ENCODE measurements at regions of chr3 and their contacts with region 1.

Region 1: DNA sequence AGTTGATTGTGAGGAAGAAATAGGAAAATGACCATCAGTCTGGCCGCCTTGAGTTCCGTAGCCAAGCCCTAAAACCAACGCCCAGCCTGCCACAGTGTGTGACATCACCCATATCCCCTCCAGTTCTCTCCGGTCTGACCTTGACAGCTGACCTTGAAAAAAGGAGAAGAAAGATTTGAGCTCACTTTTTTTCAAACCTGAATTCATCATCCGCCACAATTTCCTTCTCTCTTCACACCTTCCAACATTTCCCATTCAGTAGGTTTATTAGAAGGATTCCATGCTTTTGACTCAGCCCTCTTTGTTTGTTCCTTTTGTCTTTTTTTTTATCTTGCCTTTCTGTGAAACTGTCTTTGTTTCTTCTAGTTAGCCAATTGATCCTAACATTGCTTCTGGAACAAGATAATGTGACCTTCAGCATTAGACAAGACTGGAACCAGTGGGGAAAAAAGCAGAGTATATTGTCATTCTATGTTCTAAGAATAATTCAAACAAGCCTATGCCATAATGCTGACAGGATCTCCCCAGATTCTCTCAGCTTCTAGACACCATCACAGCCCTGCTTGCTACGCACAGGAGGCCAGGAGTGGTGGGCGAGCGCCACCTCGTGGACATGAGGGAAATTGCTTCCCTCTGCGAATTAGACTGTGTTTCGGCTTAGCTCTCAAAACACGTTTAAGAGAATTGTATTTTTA is 283.1 kb downstream of the FGF12 start:
- DNase-seq: peak; percentile 4
- ATAC-seq: peak; percentile 95
- H3K4me3 ChIP-seq: no peak overlapping the region
- H3K27ac ChIP-seq: no peak overlapping the region
- H3K4me1 ChIP-seq: no peaks in the 10 kb centered on the region
- H3K27me3 ChIP-seq: no peaks in the 10 kb centered on the region
- CTCF ChIP-seq: peak; percentile 96 to 99 (median 98); a peak in 5 of 6 replicates
- EP300 ChIP-seq: no peak
- POLR2A ChIP-seq: no peak
- RAD21 ChIP-seq: peak; percentile 99

Region 2: GRCh38 chr3:191420771-191421170 is 1023.5 kb before region 1 on chr3:
- CTCF ChIA-PET with region 1: interaction called, 18 read pairs
- POLR2A ChIA-PET with region 1: no interaction called
- RAD21 ChIA-PET with region 1: interaction called, 7 read pairs
- SMC1A ChIA-PET with region 1: interaction called, 11 read pairs
- in situ Hi-C with region 1: loop called (anchors 5 kb)
- intact Hi-C with region 1: loop called (anchors 1 kb)
- DNase-seq: no peak
- ATAC-seq: no peak
- H3K4me3 ChIP-seq: no peak overlapping the region
- H3K27ac ChIP-seq: no peak overlapping the region
- H3K4me1 ChIP-seq: no peaks in the 10 kb centered on the region
- H3K27me3 ChIP-seq: peaks cover 0 to 1% of the 10 kb centered on the region in 2 experiments; a peak in 1 of 4 replicates
- CTCF ChIP-seq: no peak
- EP300 ChIP-seq: no peak
- POLR2A ChIP-seq: no peak
- RAD21 ChIP-seq: no peak

Region 3: DNA sequence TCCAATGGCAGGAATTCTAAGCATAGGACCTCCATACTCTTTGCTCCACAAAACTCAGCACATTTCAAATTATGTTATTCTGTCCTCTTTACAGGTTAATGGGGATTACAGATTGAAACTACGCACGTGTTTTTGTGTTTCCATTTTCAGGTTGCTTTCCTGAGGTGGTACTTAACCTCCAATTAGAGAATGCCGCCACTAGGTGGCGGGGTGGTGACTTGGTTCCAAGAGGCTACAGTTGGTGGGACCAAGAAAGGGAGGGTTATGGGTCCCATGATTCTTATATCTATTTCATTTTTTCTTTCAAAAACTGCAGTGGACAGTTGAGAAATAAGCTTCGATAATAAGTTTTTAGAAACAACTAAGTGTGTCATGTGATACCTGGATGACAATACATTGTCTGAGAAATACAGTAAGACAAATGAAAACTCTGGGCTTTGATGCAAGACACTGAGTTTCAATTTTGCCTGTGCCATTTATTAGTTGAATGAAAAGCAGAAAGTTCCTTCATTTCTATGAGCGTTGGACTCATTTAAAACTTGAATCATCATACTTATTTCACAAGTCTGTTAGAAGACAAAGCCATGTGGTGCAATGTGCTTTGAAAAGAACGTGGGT is 255.9 kb before region 1 on chr3:
- CTCF ChIA-PET with region 1: interaction called, 45 read pairs
- POLR2A ChIA-PET with region 1: no interaction called
- RAD21 ChIA-PET with region 1: interaction called, 4 read pairs
- SMC1A ChIA-PET with region 1: interaction called, 23 read pairs
- in situ Hi-C with region 1: loop called (anchors 25 kb)
- intact Hi-C with region 1: loop called (anchors 1 kb)
- DNase-seq: no peak
- ATAC-seq: peak; percentile 95
- H3K4me3 ChIP-seq: no peak overlapping the region
- H3K27ac ChIP-seq: no peak overlapping the region
- H3K4me1 ChIP-seq: no peaks in the 10 kb centered on the region
- H3K27me3 ChIP-seq: no peaks in the 10 kb centered on the region
- CTCF ChIP-seq: peak; percentile 70 to 79 (median 78)
- EP300 ChIP-seq: no peak
- POLR2A ChIP-seq: no peak
- RAD21 ChIP-seq: peak; percentile 62

Region 4: DNA sequence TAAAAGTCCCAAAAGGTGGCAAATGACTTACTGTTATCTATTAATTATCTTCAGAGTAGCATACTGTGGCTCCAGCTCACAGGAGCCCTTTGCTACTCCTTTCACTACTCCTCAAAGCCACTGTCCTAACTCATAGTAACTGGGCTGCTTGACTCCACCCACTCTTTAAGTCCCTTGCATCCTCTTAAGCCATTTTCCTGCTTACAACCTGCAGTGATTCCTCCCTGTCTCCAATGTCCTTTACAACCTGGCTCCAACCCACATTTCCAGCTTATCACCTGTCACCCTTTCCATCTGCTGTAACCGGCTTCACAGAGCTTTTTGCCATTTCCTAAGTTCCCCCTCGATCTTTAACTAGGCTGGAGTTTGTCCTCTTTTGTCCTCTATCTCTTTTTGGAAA is 105.0 kb before region 1 on chr3:
- CTCF ChIA-PET with region 1: interaction called, 10 read pairs
- POLR2A ChIA-PET with region 1: no interaction called
- RAD21 ChIA-PET with region 1: no interaction called
- SMC1A ChIA-PET with region 1: no interaction called
- in situ Hi-C with region 1: no loop called
- intact Hi-C with region 1: no loop called
- DNase-seq: no peak
- ATAC-seq: no peak
- H3K4me3 ChIP-seq: no peak overlapping the region
- H3K27ac ChIP-seq: no peak overlapping the region
- H3K4me1 ChIP-seq: no peaks in the 10 kb centered on the region
- H3K27me3 ChIP-seq: no peaks in the 10 kb centered on the region
- CTCF ChIP-seq: no peak
- EP300 ChIP-seq: no peak
- POLR2A ChIP-seq: no peak
- RAD21 ChIP-seq: no peak

Region 5: GRCh38 chr3:192433704-192434103 is 10.5 kb before region 1 on chr3:
- CTCF ChIA-PET with region 1: interaction called, 37 read pairs
- POLR2A ChIA-PET with region 1: interaction called, 6 read pairs
- RAD21 ChIA-PET with region 1: interaction called, 3 read pairs
- SMC1A ChIA-PET with region 1: interaction called, 16 read pairs
- in situ Hi-C with region 1: no loop called
- intact Hi-C with region 1: no loop called
- DNase-seq: peak; percentile 3
- ATAC-seq: peak; percentile 60; the same call in 2 of the 3 replicates
- H3K4me3 ChIP-seq: no peak overlapping the region
- H3K27ac ChIP-seq: no peak overlapping the region
- H3K4me1 ChIP-seq: no peaks in the 10 kb centered on the region
- H3K27me3 ChIP-seq: no peaks in the 10 kb centered on the region; a peak in 1 of 4 replicates
- CTCF ChIP-seq: no peak
- EP300 ChIP-seq: no peak
- POLR2A ChIP-seq: no peak
- RAD21 ChIP-seq: no peak

Region 6: GRCh38 chr3:193016437-193016901 is 572.2 kb after region 1 on chr3:
- CTCF ChIA-PET with region 1: no interaction called
- POLR2A ChIA-PET with region 1: no interaction called
- RAD21 ChIA-PET with region 1: no interaction called
- SMC1A ChIA-PET with region 1: no interaction called
- in situ Hi-C with region 1: no loop called
- intact Hi-C with region 1: no loop called
- DNase-seq: no peak
- ATAC-seq: no peak
- H3K4me3 ChIP-seq: no peak overlapping the region
- H3K27ac ChIP-seq: no peak overlapping the region
- H3K4me1 ChIP-seq: no peaks in the 10 kb centered on the region
- H3K27me3 ChIP-seq: no peaks in the 10 kb centered on the region
- CTCF ChIP-seq: no peak
- EP300 ChIP-seq: no peak
- POLR2A ChIP-seq: no peak
- RAD21 ChIP-seq: no peak

Measured in GM12878 (cell line).